Panc1 (cell line): ENCODE measurements at regions of chr22 and their contacts with region 1.

Region 1: DNA sequence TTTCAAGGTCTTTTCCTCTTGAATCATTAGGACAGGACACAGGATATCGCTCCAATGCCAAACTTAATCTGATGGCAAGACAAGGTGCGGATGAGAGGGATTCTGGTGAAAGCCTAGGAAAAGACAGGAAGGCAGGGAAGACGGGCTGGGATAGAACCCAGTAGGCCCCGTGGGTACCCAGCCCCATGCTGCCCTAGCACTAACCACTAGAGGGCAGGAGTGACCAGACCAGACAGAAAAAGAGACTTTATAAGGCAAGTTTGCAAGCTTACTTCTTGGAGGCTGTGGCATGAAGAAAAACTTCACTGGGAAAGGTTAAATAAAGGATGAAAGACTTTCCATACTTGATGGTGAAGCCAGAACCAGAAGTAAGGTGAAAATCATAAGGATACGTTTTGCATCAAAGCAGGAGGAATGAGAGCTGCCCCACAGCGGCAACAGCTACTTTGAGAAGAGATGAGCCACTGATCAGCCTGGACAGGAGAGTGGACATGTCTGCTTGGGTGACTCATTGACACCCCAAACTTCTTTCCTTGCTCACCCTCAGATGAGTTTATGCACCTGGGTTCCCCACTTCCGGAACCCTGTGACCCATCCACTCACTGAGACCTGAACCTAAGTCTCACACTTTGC is 39.8 kb downstream of the SYN3 start:
- DNase-seq: peak; percentile 42
- ATAC-seq: peak; percentile 81; the same call in 1 of the 2 replicates
- H3K4me3 ChIP-seq: no peak overlapping the region
- H3K27ac ChIP-seq: no peak overlapping the region
- H3K4me1 ChIP-seq: no peaks in the 10 kb centered on the region
- H3K27me3 ChIP-seq: no peaks in the 10 kb centered on the region; the same call in 1 of the 2 replicates
- CTCF ChIP-seq: peak; percentile 82

Region 2: DNA sequence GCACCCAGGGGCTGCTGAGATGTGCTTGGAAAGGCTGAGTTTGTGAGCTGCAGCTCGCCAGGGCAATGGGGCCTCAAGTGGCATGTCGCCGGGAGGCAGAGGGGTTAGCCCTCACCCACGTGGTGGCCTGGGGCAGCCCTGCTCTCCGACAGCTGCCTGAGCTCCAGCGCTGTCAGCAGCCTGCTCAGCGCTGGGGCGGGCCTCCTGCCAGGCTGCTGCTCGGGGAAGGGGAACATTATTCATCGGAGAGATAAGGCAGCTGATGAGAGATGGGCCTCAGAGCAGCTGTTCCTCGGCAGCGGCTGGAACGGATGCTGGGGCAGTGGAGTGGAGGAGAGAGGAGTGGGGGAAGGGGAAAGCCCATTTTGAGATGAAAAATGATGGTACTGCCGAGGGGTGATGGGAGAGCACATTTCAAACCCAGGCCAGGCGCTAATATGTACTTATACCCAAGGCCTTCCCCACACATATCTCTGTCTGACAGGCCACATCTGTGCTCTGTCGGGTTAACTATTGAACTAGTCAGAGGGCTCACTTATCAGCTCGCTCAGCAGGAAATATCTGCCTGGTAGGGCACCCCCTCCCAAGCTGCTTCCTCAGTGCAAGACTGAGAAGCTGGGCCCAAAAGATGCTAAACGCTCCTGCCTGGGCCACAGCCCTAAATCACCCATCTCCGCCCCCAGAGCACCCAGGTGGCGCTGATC is 137.3 kb before region 1 on chr22:
- CTCF ChIA-PET with region 1: no interaction called
- POLR2A ChIA-PET with region 1: no interaction called
- in situ Hi-C with region 1: no loop called
- intact Hi-C with region 1: no loop called
- DNase-seq: no peak
- ATAC-seq: no peak
- H3K4me3 ChIP-seq: no peak overlapping the region
- H3K27ac ChIP-seq: no peak overlapping the region
- H3K4me1 ChIP-seq: no peaks in the 10 kb centered on the region
- H3K27me3 ChIP-seq: no peaks in the 10 kb centered on the region
- CTCF ChIP-seq: no peak

Region 3: DNA sequence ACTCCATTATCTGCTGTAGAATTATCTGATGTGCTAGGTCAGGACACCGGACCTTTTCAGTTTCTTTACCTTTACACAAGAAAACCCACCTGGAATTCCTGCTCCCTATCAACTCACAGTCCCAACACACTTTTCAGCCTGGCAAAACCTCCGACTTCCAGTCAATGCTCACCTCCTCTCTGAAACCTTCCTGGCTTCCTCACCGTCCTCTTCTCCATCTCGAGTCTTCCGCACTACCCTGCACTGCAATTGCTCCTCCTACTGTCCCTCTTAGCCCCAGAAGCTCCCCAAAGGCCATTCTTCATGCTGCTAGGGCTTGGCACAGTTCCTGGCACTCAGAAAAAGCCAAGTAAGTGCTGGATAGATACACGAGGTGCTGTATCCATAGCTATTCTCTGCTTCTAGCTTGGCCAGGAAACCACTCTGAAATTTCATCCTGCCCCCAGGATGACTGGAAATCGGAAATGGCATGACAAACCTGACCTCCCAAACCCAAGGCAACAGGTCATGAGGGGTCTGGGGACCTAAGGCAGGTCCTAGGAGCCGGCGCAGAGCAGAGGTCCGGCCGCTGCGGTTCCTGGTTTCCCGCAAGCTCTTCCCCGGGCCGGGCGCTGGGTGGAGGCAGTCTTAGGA is 39.1 kb after region 1 on chr22:
- CTCF ChIA-PET with region 1: no interaction called
- POLR2A ChIA-PET with region 1: no interaction called
- in situ Hi-C with region 1: no loop called
- intact Hi-C with region 1: no loop called
- DNase-seq: no peak
- ATAC-seq: no peak
- H3K4me3 ChIP-seq: no peak overlapping the region
- H3K27ac ChIP-seq: no peak overlapping the region
- H3K4me1 ChIP-seq: no peaks in the 10 kb centered on the region
- H3K27me3 ChIP-seq: no peaks in the 10 kb centered on the region
- CTCF ChIP-seq: no peak

Region 4: DNA sequence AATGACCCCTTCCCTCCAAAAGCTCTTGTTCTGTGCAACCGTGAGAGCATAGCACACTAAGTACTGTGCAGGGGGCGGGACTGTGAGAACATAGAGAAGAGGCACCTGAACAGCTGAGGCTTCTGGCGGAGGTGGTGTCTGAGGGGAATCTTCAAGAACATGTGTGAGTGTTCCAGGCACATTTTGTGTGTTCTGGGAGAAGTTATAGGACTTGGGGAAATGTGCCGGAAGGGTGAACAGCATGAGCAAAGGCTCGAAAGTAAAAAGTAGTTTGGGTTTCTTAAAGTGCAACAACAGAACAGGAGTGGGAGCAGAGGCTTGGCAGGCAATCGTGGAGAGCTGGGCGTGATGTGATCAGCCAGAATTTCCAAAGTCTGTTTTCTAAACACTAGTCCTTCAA is 52.3 kb after region 1 on chr22:
- CTCF ChIA-PET with region 1: no interaction called
- POLR2A ChIA-PET with region 1: no interaction called
- in situ Hi-C with region 1: no loop called
- intact Hi-C with region 1: no loop called
- DNase-seq: no peak
- ATAC-seq: no peak
- H3K4me3 ChIP-seq: no peak overlapping the region
- H3K27ac ChIP-seq: no peak overlapping the region
- H3K4me1 ChIP-seq: no peaks in the 10 kb centered on the region
- H3K27me3 ChIP-seq: no peaks in the 10 kb centered on the region
- CTCF ChIP-seq: no peak

Region 5: GRCh38 chr22:33202455-33202854 is 184.1 kb after region 1 on chr22:
- CTCF ChIA-PET with region 1: interaction called, 4 read pairs
- POLR2A ChIA-PET with region 1: no interaction called
- in situ Hi-C with region 1: no loop called
- intact Hi-C with region 1: loop called (anchors 2 kb)
- DNase-seq: no peak
- ATAC-seq: no peak
- H3K4me3 ChIP-seq: no peak overlapping the region
- H3K27ac ChIP-seq: no peak overlapping the region
- H3K4me1 ChIP-seq: no peaks in the 10 kb centered on the region
- H3K27me3 ChIP-seq: no peaks in the 10 kb centered on the region
- CTCF ChIP-seq: no peak

Region 6: DNA sequence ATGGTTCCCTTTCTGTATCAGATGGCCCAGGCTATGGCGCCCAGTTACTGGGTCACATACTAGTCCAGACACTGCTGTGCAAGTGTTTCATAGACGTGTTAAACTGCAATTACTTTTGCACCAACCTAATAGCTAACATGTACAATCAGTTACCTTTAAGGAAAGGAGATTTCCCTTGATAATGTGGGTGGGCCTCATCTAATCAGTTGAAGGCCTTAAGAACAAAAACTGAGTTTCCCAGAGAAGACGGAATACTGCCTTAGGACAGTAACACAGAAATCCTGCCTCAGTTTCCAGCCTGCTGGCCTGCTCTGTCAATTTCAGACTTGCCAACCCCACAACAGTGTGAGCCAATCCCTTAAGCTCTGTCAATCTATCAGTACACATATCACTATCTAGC is 269.7 kb after region 1 on chr22:
- CTCF ChIA-PET with region 1: no interaction called
- POLR2A ChIA-PET with region 1: no interaction called
- in situ Hi-C with region 1: no loop called
- intact Hi-C with region 1: no loop called
- DNase-seq: no peak
- ATAC-seq: no peak
- H3K4me3 ChIP-seq: no peak overlapping the region
- H3K27ac ChIP-seq: no peak overlapping the region
- H3K4me1 ChIP-seq: no peaks in the 10 kb centered on the region
- H3K27me3 ChIP-seq: no peaks in the 10 kb centered on the region
- CTCF ChIP-seq: no peak